ENCODE measurements at regions of chr2 and their contacts with region 1.

Region 1: DNA sequence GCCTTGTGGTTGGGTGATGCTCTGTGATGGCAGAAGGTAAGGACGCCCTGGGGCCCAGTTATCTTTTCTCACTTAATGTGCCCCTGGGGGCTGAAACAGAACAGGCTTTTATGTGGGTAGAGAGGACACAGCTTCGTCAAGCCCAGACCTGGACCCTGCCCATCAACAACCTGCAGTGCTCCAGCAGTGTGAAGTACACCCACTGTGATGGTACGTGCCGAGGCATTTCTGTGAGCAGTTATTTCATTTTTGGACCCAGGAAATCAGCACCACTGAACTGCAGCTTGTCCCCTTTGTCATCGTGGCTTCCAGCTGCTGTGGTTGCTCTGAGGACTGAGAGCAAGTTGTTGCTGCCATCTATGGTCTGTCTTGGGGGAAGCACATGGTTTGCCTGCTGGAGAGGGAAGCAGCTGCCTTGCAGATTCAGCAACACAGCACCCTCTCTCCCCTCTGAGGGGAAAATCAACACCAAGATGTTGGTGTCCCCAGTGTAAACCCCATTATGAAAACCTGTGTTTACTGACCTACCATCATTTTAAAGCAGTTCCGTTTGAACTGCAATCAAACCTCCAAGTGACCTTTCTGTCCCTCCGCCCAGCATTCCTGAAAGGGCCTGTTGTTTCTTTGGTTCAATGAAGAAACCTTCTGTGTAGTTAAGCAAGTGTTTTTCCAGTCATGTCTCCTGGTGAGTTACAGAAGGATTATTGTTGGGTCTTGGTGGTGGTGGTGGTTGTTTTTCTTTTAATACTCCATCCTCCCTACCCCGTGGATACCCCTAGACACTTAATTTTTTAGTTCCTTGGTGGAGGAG is 158.2 kb downstream of the MGAT5 start:
- DNase-seq: peak; percentile 89
- ATAC-seq: peak; percentile 93
- H3K4me3 ChIP-seq: peak overlapping the region in 2 of 5 experiments; percentile 6 to 18
- H3K4me3 Mint-ChIP-seq: peak overlapping the region; percentile 59
- H3K27ac ChIP-seq: peak overlapping the region; percentile 64 to 74
- H3K27ac Mint-ChIP-seq: peak overlapping the region; percentile 86
- H3K4me1 ChIP-seq: peaks cover 45 to 50% of the 10 kb centered on the region in 2 donors
- H3K4me1 Mint-ChIP-seq: peaks cover 49% of the 10 kb centered on the region
- H3K27me3 ChIP-seq: no peaks in the 10 kb centered on the region
- H3K27me3 Mint-ChIP-seq: no peaks in the 10 kb centered on the region
- CTCF ChIP-seq: peak; percentile 81

Region 2: GRCh38 chr2:133879703-133880102 is 532.3 kb before region 1 on chr2:
- CTCF ChIA-PET with region 1: interaction called, 232 read pairs
- POLR2A ChIA-PET with region 1: no interaction called
- intact Hi-C with region 1: no loop called
- DNase-seq: no peak
- ATAC-seq: no peak
- H3K4me3 ChIP-seq: no peak overlapping the region
- H3K4me3 Mint-ChIP-seq: no peak overlapping the region
- H3K27ac ChIP-seq: no peak overlapping the region
- H3K27ac Mint-ChIP-seq: no peak overlapping the region
- H3K4me1 ChIP-seq: no peaks in the 10 kb centered on the region
- H3K4me1 Mint-ChIP-seq: no peaks in the 10 kb centered on the region
- H3K27me3 ChIP-seq: peaks cover 0 to 3% (median 1%) of the 10 kb centered on the region in 4 experiments
- H3K27me3 Mint-ChIP-seq: peaks cover 31% of the 10 kb centered on the region
- CTCF ChIP-seq: no peak

Region 3: DNA sequence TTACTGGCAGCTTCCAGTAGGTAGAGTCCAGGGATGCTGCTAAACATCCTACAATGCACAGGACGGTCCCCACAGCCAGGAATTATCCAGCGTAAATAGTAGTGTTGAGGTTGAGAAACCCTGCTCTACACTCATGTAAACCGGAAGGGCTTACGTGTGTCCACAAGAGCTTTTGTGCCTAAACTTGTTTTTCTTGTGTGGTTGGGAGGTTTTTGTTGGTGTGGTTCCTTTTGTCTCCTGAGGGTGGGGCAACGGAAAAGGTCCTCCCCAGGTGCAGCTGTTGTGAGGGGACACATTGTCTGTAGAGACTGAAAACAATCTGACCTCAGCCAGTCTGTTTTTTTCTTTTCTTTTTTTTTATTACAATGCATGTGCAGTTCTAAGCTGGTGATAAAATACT is 230.8 kb before region 1 on chr2:
- CTCF ChIA-PET with region 1: interaction called, 5 read pairs
- POLR2A ChIA-PET with region 1: no interaction called
- intact Hi-C with region 1: loop called (anchors 1 kb)
- DNase-seq: peak; percentile 69
- ATAC-seq: peak; percentile 85
- H3K4me3 ChIP-seq: no peak overlapping the region
- H3K4me3 Mint-ChIP-seq: peak overlapping the region; percentile 76
- H3K27ac ChIP-seq: peak overlapping the region; percentile 63 to 81
- H3K27ac Mint-ChIP-seq: peak overlapping the region; percentile 95
- H3K4me1 ChIP-seq: peaks cover 84 to 93% of the 10 kb centered on the region in 2 donors
- H3K4me1 Mint-ChIP-seq: peaks cover 91% of the 10 kb centered on the region
- H3K27me3 ChIP-seq: no peaks in the 10 kb centered on the region
- H3K27me3 Mint-ChIP-seq: no peaks in the 10 kb centered on the region
- CTCF ChIP-seq: peak; percentile 28

Region 4: DNA sequence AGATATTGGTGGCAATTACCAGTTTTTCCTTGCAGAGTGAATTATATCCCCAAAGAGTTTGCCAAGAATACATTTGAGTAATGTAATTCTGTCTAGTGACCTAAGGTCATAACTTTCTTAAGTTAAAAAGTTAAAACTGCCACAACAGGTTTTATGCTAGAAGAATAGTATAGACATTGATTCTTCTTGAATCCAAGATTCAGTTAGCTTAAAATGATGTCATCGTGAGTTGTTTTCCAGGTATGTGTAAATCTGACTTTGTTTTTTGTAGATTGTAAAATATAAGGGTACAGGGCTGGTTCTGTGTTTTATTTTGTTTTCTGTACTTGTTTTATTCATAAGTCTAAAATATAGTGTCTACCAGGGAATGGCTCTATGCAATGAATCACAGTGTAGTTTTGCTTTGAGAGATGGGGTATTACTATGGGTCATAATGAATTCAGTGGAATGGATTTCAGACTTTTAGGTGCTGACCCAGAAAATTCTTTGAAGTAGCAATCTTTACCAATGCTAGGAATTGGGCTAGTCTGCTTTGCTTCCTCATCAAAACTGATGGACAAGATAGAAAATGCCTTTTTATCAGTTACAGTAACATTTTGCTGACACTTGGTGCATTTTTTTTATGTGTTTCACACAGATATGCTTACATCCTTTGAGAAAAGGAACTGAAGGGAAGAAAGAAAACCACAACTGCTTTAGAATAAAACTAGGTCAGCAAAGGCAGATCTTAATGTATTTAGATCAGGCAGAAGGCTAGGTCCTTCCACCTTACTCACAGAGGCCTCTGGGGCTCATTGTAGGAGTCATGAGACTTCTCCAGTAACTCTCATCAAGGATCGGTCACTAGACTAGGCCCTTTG is 178.9 kb before region 1 on chr2:
- CTCF ChIA-PET with region 1: interaction called, 18 read pairs
- POLR2A ChIA-PET with region 1: no interaction called
- intact Hi-C with region 1: no loop called
- DNase-seq: peak; percentile 63
- ATAC-seq: peak; percentile 31
- H3K4me3 ChIP-seq: peak overlapping the region in 3 of 5 experiments; percentile 7 to 48 (median 30)
- H3K4me3 Mint-ChIP-seq: peak overlapping the region; percentile 55
- H3K27ac ChIP-seq: peak overlapping the region; percentile 63 to 79
- H3K27ac Mint-ChIP-seq: peak overlapping the region; percentile 87
- H3K4me1 ChIP-seq: peaks cover 76% of the 10 kb centered on the region in 2 donors
- H3K4me1 Mint-ChIP-seq: peaks cover 88% of the 10 kb centered on the region
- H3K27me3 ChIP-seq: no peaks in the 10 kb centered on the region
- H3K27me3 Mint-ChIP-seq: no peaks in the 10 kb centered on the region
- CTCF ChIP-seq: no peak

Region 5: GRCh38 chr2:134261398-134262131 is 150.5 kb before region 1 on chr2:
- CTCF ChIA-PET with region 1: interaction called, 17 read pairs
- POLR2A ChIA-PET with region 1: interaction called, 5 read pairs
- intact Hi-C with region 1: no loop called
- DNase-seq: peak; percentile 78
- ATAC-seq: peak; percentile 55
- H3K4me3 ChIP-seq: peak overlapping the region in 1 of 5 experiments; percentile 22
- H3K4me3 Mint-ChIP-seq: peak overlapping the region; percentile 80
- H3K27ac ChIP-seq: peak overlapping the region; percentile 94 to 96
- H3K27ac Mint-ChIP-seq: peak overlapping the region; percentile 99
- H3K4me1 ChIP-seq: peaks cover 92 to 94% of the 10 kb centered on the region in 2 donors
- H3K4me1 Mint-ChIP-seq: peaks cover 86% of the 10 kb centered on the region
- H3K27me3 ChIP-seq: no peaks in the 10 kb centered on the region
- H3K27me3 Mint-ChIP-seq: no peaks in the 10 kb centered on the region
- CTCF ChIP-seq: no peak

Region 6: GRCh38 chr2:134391751-134392160 is 20.3 kb before region 1 on chr2:
- CTCF ChIA-PET with region 1: interaction called, 18 read pairs
- POLR2A ChIA-PET with region 1: no interaction called
- intact Hi-C with region 1: no loop called
- DNase-seq: peak; percentile 23
- ATAC-seq: peak; percentile 31
- H3K4me3 ChIP-seq: no peak overlapping the region
- H3K4me3 Mint-ChIP-seq: no peak overlapping the region
- H3K27ac ChIP-seq: peak overlapping the region; percentile 41 to 61
- H3K27ac Mint-ChIP-seq: peak overlapping the region; percentile 80
- H3K4me1 ChIP-seq: peaks cover 13 to 21% of the 10 kb centered on the region in 2 donors
- H3K4me1 Mint-ChIP-seq: peaks cover 29% of the 10 kb centered on the region
- H3K27me3 ChIP-seq: no peaks in the 10 kb centered on the region
- H3K27me3 Mint-ChIP-seq: no peaks in the 10 kb centered on the region
- CTCF ChIP-seq: no peak

Measured in B cell (primary cell).